ENCODE measurements at regions of chr17 and their contacts with region 1.

Region 1: DNA sequence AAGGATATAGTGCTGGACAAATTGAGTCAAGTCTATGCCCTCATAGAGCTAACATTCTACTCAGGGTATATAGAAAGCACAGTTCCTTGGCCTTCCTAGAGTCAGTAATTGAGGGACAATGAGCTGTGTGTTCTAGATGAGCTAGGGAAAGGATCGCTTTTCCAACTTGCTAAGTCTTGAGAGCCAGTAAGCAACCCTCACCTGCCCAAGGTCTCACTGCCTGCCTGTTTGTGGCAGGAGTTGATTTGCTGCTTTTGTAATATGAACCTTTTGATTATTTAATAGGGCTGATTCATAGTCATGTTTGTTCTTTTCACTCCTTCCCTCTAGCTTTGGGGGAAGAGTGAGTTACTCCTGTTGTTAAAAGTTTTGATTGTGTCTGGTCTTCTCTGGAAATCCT is 6.6 kb downstream of the DDX42 start:
- DNase-seq: peak; percentile 29

Region 2: GRCh38 chr17:63819585-63820537 is 39.3 kb after region 1 on chr17:
- in situ Hi-C with region 1: loop called (anchors 5 kb)
- DNase-seq: no peak

Region 3: DNA sequence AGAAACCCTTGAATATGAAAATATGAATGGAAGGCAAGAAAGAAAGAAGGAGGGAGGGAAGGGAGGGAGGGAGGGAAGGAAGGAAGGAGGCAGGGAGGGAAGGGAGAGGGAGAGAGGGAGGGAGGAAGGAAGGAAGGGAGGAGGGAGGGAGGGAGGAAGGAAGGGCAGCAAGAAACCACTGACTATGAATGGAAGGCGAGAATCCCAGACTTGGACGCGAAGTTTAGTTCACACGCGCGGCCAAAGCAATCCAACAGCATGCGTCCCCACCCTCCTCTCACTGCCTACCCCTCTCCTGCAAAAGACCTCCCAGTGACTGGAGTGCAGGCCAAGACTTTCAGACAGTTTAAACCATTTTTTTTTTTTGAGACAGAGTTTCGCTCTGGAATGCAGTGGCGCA is 69.9 kb after region 1 on chr17:
- in situ Hi-C with region 1: no loop called
- DNase-seq: no peak

Region 4: GRCh38 chr17:63966646-63967264 is 186.2 kb after region 1 on chr17:
- in situ Hi-C with region 1: no loop called
- DNase-seq: no peak

Measured in Caki2 (cell line).